Caco-2 (cell line): ENCODE measurements at regions of chr11 and their contacts with region 1.

Region 1: GRCh38 chr11:36564376-36565030 is 3.3 kb upstream of the RAG1 start:
- DNase-seq: peak; percentile 44 to 51
- H3K4me3 ChIP-seq: no peak overlapping the region
- H3K4me3 Mint-ChIP-seq: peak overlapping the region; percentile 47
- H3K27ac Mint-ChIP-seq: no peak overlapping the region
- H3K4me1 ChIP-seq: no peaks in the 10 kb centered on the region
- H3K4me1 Mint-ChIP-seq: no peaks in the 10 kb centered on the region
- H3K27me3 ChIP-seq: no peaks in the 10 kb centered on the region; the same call in 1 of the 2 replicates
- H3K27me3 Mint-ChIP-seq: peaks cover 8% of the 10 kb centered on the region
- CTCF ChIP-seq: peak; percentile 60 to 71

Region 2: GRCh38 chr11:36622431-36623136 is 58.1 kb after region 1 on chr11:
- CTCF ChIA-PET with region 1: interaction called, 5 read pairs
- POLR2A ChIA-PET with region 1: no interaction called
- intact Hi-C with region 1: loop called (anchors 1 kb)
- DNase-seq: peak in 1 of 2 experiments; percentile 45
- H3K4me3 ChIP-seq: no peak overlapping the region
- H3K4me3 Mint-ChIP-seq: no peak overlapping the region
- H3K27ac Mint-ChIP-seq: no peak overlapping the region
- H3K4me1 ChIP-seq: no peaks in the 10 kb centered on the region
- H3K4me1 Mint-ChIP-seq: no peaks in the 10 kb centered on the region
- H3K27me3 ChIP-seq: no peaks in the 10 kb centered on the region
- H3K27me3 Mint-ChIP-seq: no peaks in the 10 kb centered on the region
- CTCF ChIP-seq: peak in 1 of 2 experiments; percentile 69

Region 3: GRCh38 chr11:36672813-36673450 is 108.4 kb after region 1 on chr11:
- CTCF ChIA-PET with region 1: no interaction called
- POLR2A ChIA-PET with region 1: no interaction called
- intact Hi-C with region 1: loop called (anchors 1 kb)
- DNase-seq: peak in 1 of 2 experiments; percentile 24
- H3K4me3 ChIP-seq: no peak overlapping the region
- H3K4me3 Mint-ChIP-seq: no peak overlapping the region
- H3K27ac Mint-ChIP-seq: no peak overlapping the region
- H3K4me1 ChIP-seq: no peaks in the 10 kb centered on the region
- H3K4me1 Mint-ChIP-seq: no peaks in the 10 kb centered on the region
- H3K27me3 ChIP-seq: no peaks in the 10 kb centered on the region
- H3K27me3 Mint-ChIP-seq: no peaks in the 10 kb centered on the region
- CTCF ChIP-seq: peak; percentile 34 to 46

Region 4: GRCh38 chr11:36684840-36685801 is 120.6 kb after region 1 on chr11:
- CTCF ChIA-PET with region 1: no interaction called
- POLR2A ChIA-PET with region 1: no interaction called
- intact Hi-C with region 1: loop called (anchors 5 kb)
- DNase-seq: no peak
- H3K4me3 ChIP-seq: no peak overlapping the region
- H3K4me3 Mint-ChIP-seq: no peak overlapping the region
- H3K27ac Mint-ChIP-seq: no peak overlapping the region
- H3K4me1 ChIP-seq: no peaks in the 10 kb centered on the region
- H3K4me1 Mint-ChIP-seq: no peaks in the 10 kb centered on the region
- H3K27me3 ChIP-seq: no peaks in the 10 kb centered on the region; the same call in 1 of the 2 replicates
- H3K27me3 Mint-ChIP-seq: peaks cover 8% of the 10 kb centered on the region
- CTCF ChIP-seq: no peak

Region 5: GRCh38 chr11:36746886-36747710 is 182.6 kb after region 1 on chr11:
- CTCF ChIA-PET with region 1: interaction called, 35 read pairs
- POLR2A ChIA-PET with region 1: no interaction called
- intact Hi-C with region 1: loop called (anchors 1 kb)
- DNase-seq: peak; percentile 91 to 92
- H3K4me3 ChIP-seq: no peak overlapping the region
- H3K4me3 Mint-ChIP-seq: no peak overlapping the region
- H3K27ac Mint-ChIP-seq: no peak overlapping the region
- H3K4me1 ChIP-seq: no peaks in the 10 kb centered on the region
- H3K4me1 Mint-ChIP-seq: no peaks in the 10 kb centered on the region
- H3K27me3 ChIP-seq: no peaks in the 10 kb centered on the region; the same call in 1 of the 2 replicates
- H3K27me3 Mint-ChIP-seq: peaks cover 10% of the 10 kb centered on the region
- CTCF ChIP-seq: peak; percentile 99